AG04450 (cell line): ENCODE measurements at regions of chr2 and their contacts with region 1.

Region 1: DNA sequence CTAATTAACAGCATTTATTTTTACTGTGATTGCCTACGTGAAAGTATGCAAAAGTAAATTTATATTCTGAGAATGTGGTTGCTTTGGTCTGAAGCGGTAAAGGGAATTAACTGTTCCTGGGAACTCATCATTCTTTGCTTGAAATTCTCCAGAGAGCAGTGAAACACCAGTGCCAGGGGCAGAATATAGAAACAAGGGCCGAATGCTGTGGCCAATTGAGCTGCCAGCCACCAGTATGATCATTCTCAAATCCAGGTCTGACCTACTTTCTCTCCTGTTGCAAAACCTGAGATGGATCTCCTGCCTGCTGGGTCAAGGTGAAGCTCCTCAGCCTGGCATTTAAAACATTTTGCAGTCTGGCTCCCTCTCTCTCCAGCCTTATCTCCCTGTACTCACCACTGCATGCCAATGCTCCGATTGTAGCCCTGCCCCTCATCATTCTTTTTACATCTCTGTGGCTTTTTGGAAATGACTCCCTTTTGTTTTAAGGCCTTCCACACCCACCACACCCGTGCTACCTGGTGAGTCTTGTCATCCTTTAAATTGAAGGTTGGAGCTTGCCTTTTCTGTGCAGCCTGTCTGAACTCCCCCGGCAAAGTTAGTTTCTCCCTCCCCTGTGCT is 94.5 kb upstream of the TMEM178A start:
- DNase-seq: no peak
- H3K4me3 ChIP-seq: no peak overlapping the region
- H3K27ac ChIP-seq: no peak overlapping the region
- H3K27me3 ChIP-seq: no peaks in the 10 kb centered on the region
- CTCF ChIP-seq: no peak

Region 2: DNA sequence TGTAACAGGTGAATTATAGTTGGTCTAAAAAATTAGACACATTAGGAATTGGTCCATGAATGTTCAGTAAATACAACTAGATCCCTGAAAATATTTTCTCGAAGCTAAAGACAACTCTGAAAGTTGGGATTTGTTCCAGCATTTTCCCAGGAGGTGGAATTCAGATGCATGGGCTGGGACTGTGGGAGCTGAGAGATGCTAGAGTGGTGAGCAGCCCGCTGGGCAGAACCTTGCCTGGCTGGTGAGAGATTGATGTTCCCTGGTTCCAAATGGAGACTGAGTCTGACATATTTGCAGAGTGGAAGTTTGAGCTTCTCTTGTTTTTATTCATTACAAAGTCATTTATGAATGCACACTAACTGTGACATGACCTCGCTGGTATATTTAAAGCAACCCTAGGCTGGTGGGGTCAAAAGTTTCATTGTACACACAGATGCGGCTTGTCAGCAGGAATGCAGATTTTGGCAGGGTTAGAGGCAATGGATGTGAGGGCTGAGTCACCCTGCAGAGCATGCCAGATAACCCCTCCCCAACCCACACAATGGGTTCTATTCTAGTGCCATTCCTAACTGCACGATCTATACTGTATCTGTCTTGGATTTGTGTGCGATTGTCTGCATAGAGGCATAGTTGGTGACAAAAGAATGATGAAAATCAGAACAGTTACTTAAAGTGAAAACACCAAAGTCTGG is 71.0 kb after region 1 on chr2:
- CTCF ChIA-PET with region 1: interaction called, 13 read pairs
- POLR2A ChIA-PET with region 1: no interaction called
- DNase-seq: peak; percentile 57
- H3K4me3 ChIP-seq: no peak overlapping the region
- H3K27ac ChIP-seq: no peak overlapping the region
- H3K27me3 ChIP-seq: no peaks in the 10 kb centered on the region
- CTCF ChIP-seq: no peak

Region 3: DNA sequence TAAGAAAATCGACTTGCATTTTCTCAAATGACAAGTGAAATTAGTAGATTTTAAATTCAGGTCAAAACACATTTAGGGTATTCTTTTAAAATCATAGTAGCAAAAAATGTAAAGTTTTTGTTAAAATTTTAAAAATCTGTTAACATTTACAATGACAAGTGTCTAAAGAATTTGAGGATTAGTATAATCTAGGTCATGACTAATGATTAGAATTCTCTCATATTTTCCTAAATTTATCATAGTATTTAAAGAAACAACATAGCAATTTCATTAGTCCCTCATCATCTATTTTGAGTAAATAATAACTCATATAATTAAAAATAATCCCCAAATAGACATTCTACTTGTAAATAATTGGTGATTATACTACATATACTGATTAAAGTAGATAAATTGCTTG is 184.2 kb after region 1 on chr2:
- CTCF ChIA-PET with region 1: no interaction called
- POLR2A ChIA-PET with region 1: no interaction called
- DNase-seq: no peak
- H3K4me3 ChIP-seq: no peak overlapping the region
- H3K27ac ChIP-seq: no peak overlapping the region
- H3K27me3 ChIP-seq: no peaks in the 10 kb centered on the region
- CTCF ChIP-seq: no peak